Mammary epithelial cell (primary cell): ENCODE measurements at regions of chr14 and their contacts with region 1.

Region 1: DNA sequence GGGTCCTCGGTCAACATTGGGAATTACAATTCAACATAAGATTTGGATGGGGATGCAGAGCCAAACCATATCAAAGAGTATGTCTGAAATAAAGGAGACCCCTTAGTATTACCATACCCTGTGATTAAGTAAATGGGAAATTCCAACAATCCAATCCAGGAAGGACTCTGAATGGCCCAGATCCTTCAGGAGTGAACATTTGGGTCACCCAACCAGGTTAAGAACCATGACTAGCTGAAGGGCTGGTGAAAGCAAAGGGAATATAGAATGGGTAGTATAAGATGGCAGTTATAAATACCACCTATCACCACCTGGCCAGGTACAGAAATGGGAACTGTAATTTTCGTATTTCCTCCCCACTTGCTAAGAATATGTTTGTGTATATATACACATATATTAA is 114.4 kb upstream of the CCDC196 start:
- DNase-seq: no peak
- H3K4me3 ChIP-seq: no peak overlapping the region
- H3K27ac ChIP-seq: no peak overlapping the region
- H3K4me1 ChIP-seq: no peaks in the 10 kb centered on the region
- H3K27me3 ChIP-seq: no peaks in the 10 kb centered on the region
- CTCF ChIP-seq: no peak

Region 2: GRCh38 chr14:66117585-66117984 is 254.2 kb before region 1 on chr14:
- CTCF ChIA-PET with region 1: no interaction called
- dilution Hi-C with region 1: no loop called
- in situ Hi-C with region 1: no loop called
- intact Hi-C with region 1: no loop called
- DNase-seq: peak; percentile 76
- H3K4me3 ChIP-seq: no peak overlapping the region
- H3K27ac ChIP-seq: peak overlapping the region; percentile 27
- H3K4me1 ChIP-seq: peaks cover 17% of the 10 kb centered on the region
- H3K27me3 ChIP-seq: no peaks in the 10 kb centered on the region
- CTCF ChIP-seq: no peak

Region 3: DNA sequence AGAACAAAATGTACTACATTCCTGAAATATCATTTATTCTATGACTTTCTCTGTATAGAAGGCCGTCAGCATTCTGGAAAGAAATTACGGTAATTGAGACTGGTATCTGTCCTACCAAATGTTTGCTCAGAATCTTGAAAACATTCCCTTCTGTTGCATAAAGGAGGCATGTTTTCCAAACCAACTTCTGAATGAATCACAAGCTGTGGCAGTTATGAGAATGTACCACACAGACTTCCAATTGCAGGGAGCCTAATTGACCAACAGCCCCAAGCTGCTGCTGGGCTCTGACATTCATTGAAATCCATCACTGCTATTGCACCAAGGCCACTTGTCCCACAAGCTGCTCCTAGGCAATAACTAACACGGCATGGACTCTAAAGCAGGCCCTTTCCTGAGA is 70.9 kb before region 1 on chr14:
- CTCF ChIA-PET with region 1: no interaction called
- dilution Hi-C with region 1: no loop called
- in situ Hi-C with region 1: no loop called
- intact Hi-C with region 1: no loop called
- DNase-seq: no peak
- H3K4me3 ChIP-seq: no peak overlapping the region
- H3K27ac ChIP-seq: no peak overlapping the region
- H3K4me1 ChIP-seq: no peaks in the 10 kb centered on the region
- H3K27me3 ChIP-seq: no peaks in the 10 kb centered on the region
- CTCF ChIP-seq: no peak

Region 4: DNA sequence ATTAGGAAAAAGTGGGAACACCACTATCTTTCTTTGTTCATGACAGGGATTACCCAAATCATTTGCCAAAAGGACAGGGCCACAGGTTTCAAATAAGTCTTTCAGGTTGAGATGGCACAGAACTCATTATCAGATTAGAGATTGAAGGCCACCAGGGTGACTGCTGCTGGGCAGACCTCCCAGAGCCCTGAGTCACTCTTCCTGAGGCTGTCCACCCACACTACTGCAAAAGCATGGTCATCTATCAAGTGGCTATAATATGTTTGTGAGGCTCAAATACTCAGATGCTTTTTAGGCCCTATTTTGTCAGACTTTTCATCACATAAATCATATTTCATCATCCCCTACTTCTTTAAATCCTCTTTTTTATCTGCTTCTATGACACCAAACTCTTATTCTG is 40.9 kb before region 1 on chr14:
- CTCF ChIA-PET with region 1: no interaction called
- dilution Hi-C with region 1: loop called (anchors 5 kb)
- in situ Hi-C with region 1: no loop called
- intact Hi-C with region 1: no loop called
- DNase-seq: peak; percentile 5
- H3K4me3 ChIP-seq: no peak overlapping the region
- H3K27ac ChIP-seq: no peak overlapping the region
- H3K4me1 ChIP-seq: no peaks in the 10 kb centered on the region
- H3K27me3 ChIP-seq: no peaks in the 10 kb centered on the region
- CTCF ChIP-seq: no peak